GM12878 (cell line): ENCODE measurements at regions of chr9 and their contacts with region 1.

Region 1: DNA sequence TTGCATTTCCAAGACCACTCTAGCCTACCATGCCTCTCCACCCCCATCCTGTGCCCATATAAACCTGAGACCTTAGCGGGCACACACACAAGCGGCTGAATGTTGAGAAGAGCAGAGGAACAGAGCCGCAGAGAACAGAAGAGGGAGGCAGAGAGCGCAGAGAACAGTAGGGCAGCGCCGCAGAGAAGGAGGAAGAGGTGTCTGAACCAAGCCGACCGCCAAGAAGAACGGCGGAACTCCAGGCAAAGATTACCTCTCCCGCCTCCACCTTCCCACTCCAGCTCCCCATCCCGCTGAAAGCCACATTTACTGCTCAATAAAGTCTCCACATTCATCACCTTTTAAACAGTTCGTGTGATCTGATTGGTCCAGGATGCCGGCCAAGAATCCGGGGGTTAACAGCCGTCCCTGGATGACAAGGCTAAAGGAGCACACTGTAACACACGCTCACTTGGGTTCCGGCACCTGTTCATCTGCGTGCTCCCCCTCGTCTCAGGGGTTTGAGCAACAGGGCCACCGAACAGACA is 33.2 kb downstream of the GRIN3A start:
- DNase-seq: no peak
- ATAC-seq: peak; percentile 72
- H3K4me3 ChIP-seq: no peak overlapping the region
- H3K27ac ChIP-seq: no peak overlapping the region
- H3K4me1 ChIP-seq: no peaks in the 10 kb centered on the region; the same call in 1 of the 2 replicates
- H3K27me3 ChIP-seq: peaks cover 0 to 2% of the 10 kb centered on the region in 2 experiments; a peak in 2 of 4 replicates
- CTCF ChIP-seq: no peak
- EP300 ChIP-seq: no peak
- POLR2A ChIP-seq: no peak
- RAD21 ChIP-seq: no peak

Region 2: GRCh38 chr9:101578378-101578777 is 126.8 kb before region 1 on chr9:
- CTCF ChIA-PET with region 1: no interaction called
- POLR2A ChIA-PET with region 1: no interaction called
- RAD21 ChIA-PET with region 1: no interaction called
- SMC1A ChIA-PET with region 1: no interaction called
- in situ Hi-C with region 1: no loop called
- intact Hi-C with region 1: no loop called
- DNase-seq: no peak
- ATAC-seq: peak; percentile 75
- H3K4me3 ChIP-seq: no peak overlapping the region
- H3K27ac ChIP-seq: no peak overlapping the region
- H3K4me1 ChIP-seq: no peaks in the 10 kb centered on the region
- H3K27me3 ChIP-seq: no peaks in the 10 kb centered on the region
- CTCF ChIP-seq: no peak
- EP300 ChIP-seq: no peak
- POLR2A ChIP-seq: no peak
- RAD21 ChIP-seq: no peak

Region 3: GRCh38 chr9:101601904-101602765 is 103.1 kb before region 1 on chr9:
- CTCF ChIA-PET with region 1: no interaction called
- POLR2A ChIA-PET with region 1: no interaction called
- RAD21 ChIA-PET with region 1: no interaction called
- SMC1A ChIA-PET with region 1: no interaction called
- in situ Hi-C with region 1: no loop called
- intact Hi-C with region 1: loop called (anchors 5 kb)
- DNase-seq: no peak
- ATAC-seq: peak; percentile 71
- H3K4me3 ChIP-seq: no peak overlapping the region
- H3K27ac ChIP-seq: no peak overlapping the region
- H3K4me1 ChIP-seq: no peaks in the 10 kb centered on the region
- H3K27me3 ChIP-seq: no peaks in the 10 kb centered on the region; a peak in 1 of 4 replicates
- CTCF ChIP-seq: peak; percentile 54 to 66 (median 59)
- EP300 ChIP-seq: no peak
- POLR2A ChIP-seq: no peak
- RAD21 ChIP-seq: peak; percentile 69